ENCODE measurements at regions of chr7 and their contacts with region 1.

Region 1: GRCh38 chr7:73522105-73522872 is at the start of gene BAZ1B:
- DNase-seq: peak; percentile 93 to 98
- H3K4me3 ChIP-seq: peak within 1 kb of the TSS; percentile 84
- H3K27ac ChIP-seq: peak within 1 kb of the TSS; percentile 39
- H3K4me1 ChIP-seq: peaks cover 28% of the 10 kb centered on the region
- H3K27me3 ChIP-seq: no peaks in the 10 kb centered on the region
- CTCF ChIP-seq: no peak
- total RNA-seq, gene BAZ1B: 73.6 and 88.4 TPM in 2 replicates

Region 2: GRCh38 chr7:73418113-73418703 is 104.1 kb before region 1 on chr7:
- CTCF ChIA-PET with region 1: no interaction called
- POLR2A ChIA-PET with region 1: no interaction called
- intact Hi-C with region 1: no loop called
- DNase-seq: no peak
- H3K4me3 ChIP-seq: no peak overlapping the region
- H3K27ac ChIP-seq: no peak overlapping the region
- H3K4me1 ChIP-seq: no peaks in the 10 kb centered on the region
- H3K27me3 ChIP-seq: no peaks in the 10 kb centered on the region
- CTCF ChIP-seq: no peak

Region 3: DNA sequence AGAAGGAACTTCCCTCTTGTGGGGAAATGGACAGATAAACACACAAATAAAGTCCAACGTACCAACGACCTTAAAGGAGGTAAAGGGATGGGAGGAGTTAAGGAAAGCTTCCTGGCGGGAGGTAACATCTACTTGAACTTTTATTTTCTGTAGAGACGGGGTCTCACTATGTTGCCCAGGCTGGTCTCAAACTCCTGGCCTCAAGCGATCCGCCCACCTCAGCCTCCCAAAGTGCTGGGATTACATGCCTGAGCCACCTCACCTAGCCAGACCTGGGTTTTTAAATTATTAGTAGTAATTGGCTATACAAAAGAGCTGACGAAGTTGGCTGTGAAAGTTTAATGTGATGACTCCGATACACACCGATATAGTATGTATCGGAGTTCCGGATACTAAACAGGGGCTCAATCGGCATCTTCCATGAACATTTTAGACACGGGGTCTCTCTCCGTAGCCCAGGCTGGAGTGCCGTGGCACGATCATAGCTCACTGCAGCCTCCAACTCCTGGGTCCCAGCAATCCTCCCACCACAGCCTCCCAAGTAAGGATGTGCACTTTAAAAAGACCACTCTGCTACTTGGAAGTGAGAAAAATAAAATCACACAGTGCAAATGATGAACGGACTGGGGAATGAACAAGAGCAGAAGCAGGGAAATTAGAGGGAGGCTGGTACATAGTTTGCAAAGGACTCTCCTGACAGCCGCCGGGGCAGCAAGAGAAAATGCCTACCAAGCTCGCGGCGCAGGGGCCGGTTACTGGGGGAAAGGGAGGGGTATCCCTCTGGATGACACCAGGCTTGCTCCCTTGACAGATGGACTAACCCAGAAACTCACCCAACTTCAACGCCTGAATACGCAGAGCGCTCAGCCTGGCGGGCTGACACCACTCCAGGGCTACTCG is 34.2 kb after region 1 on chr7:
- CTCF ChIA-PET with region 1: no interaction called
- POLR2A ChIA-PET with region 1: interaction called, 9 read pairs
- intact Hi-C with region 1: loop called (anchors 1 kb)
- DNase-seq: no peak
- H3K4me3 ChIP-seq: peak overlapping the region; percentile 68
- H3K27ac ChIP-seq: peak overlapping the region; percentile 28
- H3K4me1 ChIP-seq: peaks cover 24% of the 10 kb centered on the region
- H3K27me3 ChIP-seq: no peaks in the 10 kb centered on the region
- CTCF ChIP-seq: no peak

Region 4: DNA sequence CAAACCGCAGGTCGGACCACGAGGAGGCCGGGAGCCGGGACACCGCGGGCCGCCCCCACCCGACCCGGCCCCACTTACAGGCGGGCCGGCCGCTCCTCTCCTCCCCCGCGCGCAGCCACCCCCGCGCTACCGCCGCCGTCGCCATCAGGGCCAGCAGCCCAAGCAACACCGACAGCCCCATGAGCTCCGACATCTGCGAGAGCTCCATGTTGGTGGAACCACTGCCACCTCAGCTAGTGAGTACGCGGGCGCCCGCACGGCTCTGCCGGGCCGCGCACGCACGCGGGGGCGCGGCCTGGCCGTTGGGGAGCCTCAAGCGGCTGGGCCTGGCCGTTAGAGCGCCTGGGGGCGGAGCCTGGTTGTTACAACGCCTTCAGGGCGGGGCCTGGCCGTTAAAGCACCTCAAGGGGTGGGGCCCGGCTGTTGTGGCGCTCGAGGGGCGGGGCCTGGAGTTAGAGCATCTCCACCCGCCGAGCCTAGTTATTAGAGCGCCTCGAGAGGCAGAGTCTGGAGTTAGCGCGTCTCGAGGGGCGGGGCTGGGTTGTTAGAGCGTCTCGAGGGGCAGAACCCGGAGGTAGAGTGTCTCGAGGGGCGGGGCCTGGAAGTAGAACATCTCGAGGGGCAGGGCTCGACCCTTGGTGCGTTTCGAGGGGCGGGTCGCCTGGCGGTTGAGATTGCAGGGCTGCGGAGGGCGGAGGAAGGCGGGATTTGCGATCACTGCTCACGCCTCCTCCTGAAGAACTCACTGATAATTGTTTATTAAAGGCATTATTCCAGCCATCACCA is 56.2 kb after region 1 on chr7 and contains the start of gene TBL2:
- CTCF ChIA-PET with region 1: no interaction called
- POLR2A ChIA-PET with region 1: no interaction called
- intact Hi-C with region 1: loop called (anchors 5 kb)
- DNase-seq: peak; percentile 95 to 99
- H3K4me3 ChIP-seq: peak within 1 kb of the TSS; percentile 96
- H3K27ac ChIP-seq: peak within 1 kb of the TSS; percentile 73
- H3K4me1 ChIP-seq: peaks cover 16% of the 10 kb centered on the region
- H3K27me3 ChIP-seq: no peaks in the 10 kb centered on the region
- CTCF ChIP-seq: no peak
- total RNA-seq, gene TBL2: 43.9 and 49.2 TPM in 2 replicates

Region 5: GRCh38 chr7:73858807-73859206 is 336.5 kb after region 1 on chr7:
- CTCF ChIA-PET with region 1: interaction called, 8 read pairs
- POLR2A ChIA-PET with region 1: no interaction called
- intact Hi-C with region 1: loop called (anchors 5 kb)
- DNase-seq: no peak
- H3K4me3 ChIP-seq: no peak overlapping the region
- H3K27ac ChIP-seq: no peak overlapping the region
- H3K4me1 ChIP-seq: peaks cover 12% of the 10 kb centered on the region
- H3K27me3 ChIP-seq: no peaks in the 10 kb centered on the region
- CTCF ChIP-seq: no peak

Region 6: GRCh38 chr7:73909051-73909941 is 387.0 kb after region 1 on chr7:
- CTCF ChIA-PET with region 1: no interaction called
- POLR2A ChIA-PET with region 1: no interaction called
- intact Hi-C with region 1: no loop called
- DNase-seq: no peak
- H3K4me3 ChIP-seq: no peak overlapping the region
- H3K27ac ChIP-seq: no peak overlapping the region
- H3K4me1 ChIP-seq: no peaks in the 10 kb centered on the region
- H3K27me3 ChIP-seq: no peaks in the 10 kb centered on the region
- CTCF ChIP-seq: no peak

Measured in PC-9 (cell line).